ENCODE measurements at regions of chr15 and their contacts with region 1.

Region 1: DNA sequence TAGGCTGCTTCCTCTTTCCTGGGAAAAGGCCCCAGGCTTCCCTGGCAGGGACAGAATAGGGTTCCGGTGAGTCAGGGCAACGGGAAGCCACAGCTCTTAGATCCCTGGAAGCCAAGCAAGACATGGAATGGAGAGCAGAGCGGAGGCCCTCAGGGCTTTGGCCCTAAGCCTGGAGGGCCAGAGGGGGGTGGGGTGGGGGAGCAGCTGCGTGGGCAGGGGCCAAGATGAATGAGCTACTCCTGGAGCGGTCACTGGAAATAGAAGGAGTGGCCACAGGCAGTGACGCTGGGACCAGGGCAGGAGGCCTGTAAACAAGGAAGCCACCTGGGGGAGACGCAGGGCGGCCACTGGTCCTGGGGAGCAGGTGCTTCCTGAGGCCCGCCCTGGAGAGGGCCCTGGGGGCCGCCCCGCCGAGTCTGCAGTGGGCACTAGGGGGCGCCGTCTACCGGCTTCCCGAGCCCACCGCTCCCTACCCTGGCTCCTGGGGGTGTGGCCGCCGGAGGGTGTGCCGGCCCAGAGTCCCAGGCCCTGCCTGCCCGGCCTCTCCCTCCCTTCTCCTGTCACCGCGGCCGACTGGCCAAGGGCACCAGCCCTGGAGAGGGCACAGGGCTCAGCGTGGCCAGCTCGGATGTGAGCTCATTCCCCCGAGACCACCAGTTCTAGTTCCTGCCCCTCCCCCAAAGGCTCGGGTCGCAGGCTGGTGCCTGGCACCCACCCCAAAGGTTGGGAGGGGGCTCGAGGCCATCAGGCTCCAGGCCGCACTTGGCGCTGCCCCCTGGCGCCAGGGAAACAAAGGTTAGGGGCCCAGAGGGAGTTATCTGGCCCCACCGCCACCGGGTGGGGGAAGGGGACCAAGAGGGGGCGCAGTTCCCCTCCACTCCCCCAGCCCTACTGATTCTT is 12.1 kb downstream of the VPS18 start:
- DNase-seq: peak; percentile 82
- ATAC-seq: peak; percentile 87
- H3K4me3 Mint-ChIP-seq: peak overlapping the region; percentile 64
- H3K27ac Mint-ChIP-seq: peak overlapping the region; percentile 41
- H3K4me1 Mint-ChIP-seq: peaks cover 28% of the 10 kb centered on the region
- H3K27me3 Mint-ChIP-seq: no peaks in the 10 kb centered on the region

Region 2: GRCh38 chr15:40918146-40918798 is 11.9 kb after region 1 on chr15:
- CTCF ChIA-PET with region 1: interaction called, 31 read pairs
- DNase-seq: no peak
- ATAC-seq: no peak
- H3K4me3 Mint-ChIP-seq: no peak overlapping the region
- H3K27ac Mint-ChIP-seq: no peak overlapping the region
- H3K4me1 Mint-ChIP-seq: no peaks in the 10 kb centered on the region
- H3K27me3 Mint-ChIP-seq: peaks cover 2% of the 10 kb centered on the region

Region 3: DNA sequence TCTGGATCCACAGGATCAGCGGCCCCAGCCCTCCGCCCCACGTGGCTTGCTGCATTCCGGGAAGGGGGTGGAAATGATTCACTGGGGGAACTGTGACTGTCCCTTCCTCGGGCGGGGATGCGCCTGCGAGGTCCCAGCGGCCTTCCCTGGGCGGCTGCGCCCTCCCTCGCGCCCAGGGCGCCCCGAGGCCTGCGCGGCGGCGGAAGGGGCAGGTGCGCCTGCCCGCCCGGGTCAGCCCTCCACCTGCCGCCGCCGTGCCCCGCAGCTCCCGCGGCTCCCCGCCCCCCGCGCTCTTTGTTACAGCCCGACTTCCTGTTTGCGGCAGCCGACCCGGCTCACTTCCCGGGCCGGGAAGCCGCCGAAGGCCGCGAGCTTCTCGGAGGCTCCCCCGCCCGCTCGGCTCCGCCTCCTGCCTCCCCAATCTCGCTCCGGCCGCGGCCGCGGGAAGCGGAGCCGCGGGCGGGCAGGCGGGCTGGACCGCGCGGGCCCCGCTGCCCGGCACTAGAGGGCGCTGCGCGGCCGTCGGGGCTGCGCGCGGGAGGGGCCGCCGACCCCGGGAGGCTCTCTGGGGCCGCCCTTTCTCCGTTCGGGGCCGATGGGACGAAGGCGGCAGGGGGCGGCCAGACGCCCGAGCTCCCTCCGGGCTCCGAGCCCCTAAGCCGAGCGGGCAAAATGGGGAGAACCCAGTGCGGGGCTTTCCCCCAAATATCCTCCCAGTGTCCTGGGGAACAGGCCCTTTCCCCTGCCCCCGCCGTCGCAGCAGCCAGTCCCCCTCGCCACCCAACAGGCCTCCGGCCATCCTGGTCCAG is 35.4 kb after region 1 on chr15:
- CTCF ChIA-PET with region 1: interaction called, 54 read pairs
- DNase-seq: peak; percentile 76
- ATAC-seq: peak; percentile 90
- H3K4me3 Mint-ChIP-seq: peak overlapping the region; percentile 74
- H3K27ac Mint-ChIP-seq: no peak overlapping the region
- H3K4me1 Mint-ChIP-seq: peaks cover 32% of the 10 kb centered on the region
- H3K27me3 Mint-ChIP-seq: peaks cover 4% of the 10 kb centered on the region

Region 4: DNA sequence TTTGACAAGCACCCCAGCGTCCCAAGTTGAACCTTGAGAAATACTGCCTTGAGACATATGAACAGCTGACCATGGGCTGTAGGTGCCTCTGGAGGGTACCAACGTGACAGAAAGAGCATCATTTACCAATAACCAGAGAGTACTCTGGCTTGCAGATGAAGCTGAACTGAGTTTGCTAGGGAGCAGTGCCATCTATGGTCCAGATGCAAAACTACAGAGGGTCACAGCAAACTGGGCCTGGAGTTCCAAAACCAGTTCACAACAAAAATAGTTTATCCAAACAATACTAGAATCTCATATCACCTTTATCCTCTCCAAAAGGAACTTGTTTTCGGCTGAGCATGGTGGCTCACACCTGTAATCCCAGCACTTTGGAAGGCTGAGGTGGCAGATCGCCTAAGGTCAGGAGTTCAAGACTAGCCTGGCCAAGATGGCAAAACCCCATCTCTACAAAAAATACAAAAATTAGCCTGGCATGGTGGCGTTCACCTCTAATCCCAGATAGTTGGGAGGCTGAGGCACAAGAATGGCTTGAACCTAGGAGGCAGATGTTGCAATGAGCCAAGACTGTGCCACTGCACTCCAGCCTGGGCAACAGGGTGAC is 116.2 kb after region 1 on chr15:
- CTCF ChIA-PET with region 1: interaction called, 49 read pairs
- DNase-seq: peak; percentile 58
- ATAC-seq: no peak
- H3K4me3 Mint-ChIP-seq: no peak overlapping the region
- H3K27ac Mint-ChIP-seq: no peak overlapping the region
- H3K4me1 Mint-ChIP-seq: peaks cover 3% of the 10 kb centered on the region
- H3K27me3 Mint-ChIP-seq: no peaks in the 10 kb centered on the region

Measured in activated CD8-positive, alpha-beta memory T cell treated with anti-CD3 and anti-CD28 coated beads, Interleukin-2, amount 10 ng/mL, durations not matched to agents 7 days and 5 days (primary cell).